IMR-90 (cell line): ENCODE measurements at regions of chr18 and their contacts with region 1.

Region 1: GRCh38 chr18:43571078-43571689 is 293.9 kb upstream of the SYT4 start:
- DNase-seq: peak; percentile 47
- ATAC-seq: peak; percentile 75; the same call in 1 of the 2 replicates
- H3K4me3 ChIP-seq: no peak overlapping the region
- H3K27ac ChIP-seq: no peak overlapping the region
- H3K4me1 ChIP-seq: no peaks in the 10 kb centered on the region
- H3K27me3 ChIP-seq: no peaks in the 10 kb centered on the region
- CTCF ChIP-seq: peak; percentile 74
- POLR2A ChIP-seq: no peak
- RAD21 ChIP-seq: peak; percentile 61

Region 2: DNA sequence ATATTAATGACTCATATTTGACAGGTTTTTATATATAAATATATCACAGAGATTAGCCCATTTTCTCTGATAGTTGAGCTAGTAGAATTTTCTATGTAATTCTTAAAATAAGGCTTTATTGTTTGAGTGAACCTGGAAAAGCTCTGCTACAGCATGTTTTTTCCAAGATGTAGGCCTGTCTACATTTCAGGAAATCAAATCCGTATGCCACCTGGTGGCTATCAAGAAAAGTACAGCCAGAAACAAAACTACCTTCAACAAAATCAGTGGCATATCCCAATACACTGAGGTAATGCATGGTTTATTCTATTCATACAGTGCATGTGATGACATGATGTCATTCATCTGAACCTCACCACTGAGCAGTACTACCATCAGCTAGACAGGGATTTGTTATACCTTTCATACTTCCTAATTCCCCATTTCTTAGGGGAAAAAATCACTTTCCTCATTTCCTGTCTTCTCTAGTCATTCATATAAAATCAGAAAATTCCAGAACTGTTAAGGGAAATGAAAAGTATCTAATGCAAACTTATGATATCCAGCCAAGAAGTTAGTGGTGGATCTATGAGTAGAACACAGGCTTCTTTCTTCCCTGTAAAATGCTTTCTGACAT is 16.5 kb after region 1 on chr18:
- CTCF ChIA-PET with region 1: interaction called, 45 read pairs
- POLR2A ChIA-PET with region 1: no interaction called
- dilution Hi-C with region 1: no loop called
- in situ Hi-C with region 1: no loop called
- intact Hi-C with region 1: loop called (anchors 1 kb)
- DNase-seq: peak; percentile 41
- ATAC-seq: peak; percentile 88
- H3K4me3 ChIP-seq: no peak overlapping the region
- H3K27ac ChIP-seq: no peak overlapping the region
- H3K4me1 ChIP-seq: no peaks in the 10 kb centered on the region
- H3K27me3 ChIP-seq: no peaks in the 10 kb centered on the region; the same call in 1 of the 2 replicates
- CTCF ChIP-seq: peak; percentile 67
- POLR2A ChIP-seq: no peak
- RAD21 ChIP-seq: peak; percentile 51

Region 3: DNA sequence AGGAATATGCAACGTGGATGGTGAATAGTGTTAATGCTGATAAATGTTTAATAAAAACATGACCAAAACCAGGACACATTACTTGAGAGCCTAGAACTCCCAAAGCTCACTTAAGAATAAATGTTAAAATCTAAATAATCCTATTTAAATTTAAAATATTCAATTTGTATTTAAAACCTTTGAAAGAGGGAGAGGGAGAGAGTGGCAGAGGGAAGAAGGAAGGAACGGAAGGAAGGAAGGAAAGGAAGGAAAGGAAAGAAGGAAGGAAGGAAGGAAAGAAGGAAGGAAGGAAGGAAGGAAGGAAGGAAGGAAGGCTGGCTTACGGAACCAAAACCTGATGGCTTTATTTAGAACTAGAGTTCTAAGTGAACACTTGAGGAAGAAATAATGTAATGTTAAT is 30.2 kb after region 1 on chr18:
- CTCF ChIA-PET with region 1: interaction called, 10 read pairs
- POLR2A ChIA-PET with region 1: no interaction called
- dilution Hi-C with region 1: no loop called
- in situ Hi-C with region 1: no loop called
- intact Hi-C with region 1: no loop called
- DNase-seq: no peak
- ATAC-seq: no peak
- H3K4me3 ChIP-seq: no peak overlapping the region
- H3K27ac ChIP-seq: no peak overlapping the region
- H3K4me1 ChIP-seq: no peaks in the 10 kb centered on the region
- H3K27me3 ChIP-seq: no peaks in the 10 kb centered on the region
- CTCF ChIP-seq: no peak
- POLR2A ChIP-seq: no peak
- RAD21 ChIP-seq: no peak